Natural killer cell (primary cell): ENCODE measurements at regions of chr1 and their contacts with region 1.

Region 1: DNA sequence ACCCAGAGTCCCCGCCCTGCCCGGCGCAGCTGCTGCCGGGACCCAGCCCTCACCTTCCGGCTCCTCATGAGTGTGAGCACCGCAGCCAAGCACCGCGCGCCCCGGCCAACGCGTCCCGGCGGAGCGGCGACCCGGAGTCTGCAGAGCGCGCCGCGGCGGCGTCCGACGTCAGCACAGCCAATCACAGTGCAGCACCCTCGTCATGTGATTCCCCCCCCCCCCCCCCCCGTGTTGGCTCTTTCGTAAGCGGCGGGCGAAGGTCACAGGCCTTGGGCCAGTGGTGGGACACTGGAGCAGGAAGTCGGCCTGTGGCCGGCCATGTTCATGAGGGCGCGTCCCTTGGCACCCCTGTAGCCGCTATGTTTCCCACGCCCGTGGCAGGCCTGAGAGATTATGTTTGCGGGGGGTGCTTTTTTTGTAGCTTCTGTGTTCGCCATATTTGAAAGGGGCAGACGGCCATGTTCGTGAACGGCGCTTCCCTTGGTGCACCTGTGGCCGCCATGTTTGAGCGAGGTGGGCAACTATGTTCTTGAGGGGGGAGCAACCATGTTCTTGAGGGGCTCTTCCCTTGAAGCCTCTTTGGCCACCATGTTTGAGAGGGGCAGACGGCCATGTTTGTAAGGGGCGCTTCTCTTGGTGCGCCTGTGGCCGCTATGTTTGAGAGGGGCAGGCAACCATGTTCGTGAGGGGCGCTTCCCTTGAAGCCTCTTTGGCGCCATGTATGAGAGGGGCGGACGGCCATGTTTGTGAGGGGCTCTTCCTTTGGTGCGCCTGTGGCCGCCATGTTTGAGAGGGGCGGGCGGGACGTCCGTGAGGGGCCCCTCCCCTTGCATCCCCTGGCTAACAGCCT is at the start of gene C1orf174:
- DNase-seq: peak; percentile 90 to 98
- ATAC-seq: peak; percentile 78 to 88 (median 80)
- H3K4me3 ChIP-seq: peak within 1 kb of the TSS; percentile 83
- H3K4me3 Mint-ChIP-seq: peak within 1 kb of the TSS; percentile 88
- H3K27ac ChIP-seq: peak within 1 kb of the TSS; percentile 96
- H3K27ac Mint-ChIP-seq: peak within 1 kb of the TSS; percentile 95 to 96
- H3K4me1 ChIP-seq: peaks cover 47% of the 10 kb centered on the region
- H3K4me1 Mint-ChIP-seq: peaks cover 41 to 52% of the 10 kb centered on the region in 2 donors
- H3K27me3 ChIP-seq: no peaks in the 10 kb centered on the region
- H3K27me3 Mint-ChIP-seq: no peaks in the 10 kb centered on the region
- CTCF ChIP-seq: no peak
- total RNA-seq, gene C1orf174: 52.9 to 62.3 (median 61.5) TPM

Region 2: DNA sequence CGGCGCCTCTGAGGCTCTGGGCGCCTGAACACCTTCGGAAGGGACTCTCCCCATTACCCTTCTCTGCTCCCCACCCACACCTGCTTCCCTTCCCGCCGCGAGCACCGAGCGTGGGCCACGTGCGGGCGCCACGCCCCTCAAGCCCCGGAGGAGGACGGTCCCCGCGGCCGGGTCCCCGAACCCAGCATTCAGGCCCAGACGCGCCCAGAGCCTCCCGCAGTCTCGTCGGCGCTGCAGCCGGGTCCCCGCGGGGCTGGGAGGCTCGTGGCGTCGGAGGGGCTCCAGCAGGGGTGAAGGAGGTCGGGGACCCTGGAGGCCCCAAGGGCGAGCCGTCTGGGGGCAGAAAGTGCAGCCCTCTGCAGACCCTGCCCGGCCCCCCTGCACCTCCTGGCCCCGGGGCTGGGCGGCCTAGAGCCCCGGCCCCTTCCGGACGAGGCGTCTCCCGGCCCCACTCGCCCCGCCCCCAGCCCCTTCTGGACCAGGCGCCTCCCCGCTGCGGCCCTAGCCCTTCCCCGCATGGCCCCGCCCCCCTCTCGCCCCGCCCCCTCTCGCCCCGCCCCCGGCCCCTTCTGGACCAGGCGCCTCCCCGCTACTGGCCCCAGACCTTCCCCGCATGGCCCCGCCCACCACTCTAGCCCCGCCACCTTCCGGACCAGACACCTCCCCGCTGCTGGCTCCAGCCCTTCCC is 128.2 kb before region 1 on chr1:
- intact Hi-C with region 1: loop called (anchors 5 kb)
- DNase-seq: peak; percentile 77 to 89
- ATAC-seq: peak; percentile 90 to 93 (median 93)
- H3K4me3 ChIP-seq: peak overlapping the region; percentile 43
- H3K4me3 Mint-ChIP-seq: peak overlapping the region; percentile 57
- H3K27ac ChIP-seq: no peak overlapping the region
- H3K27ac Mint-ChIP-seq: no peak overlapping the region
- H3K4me1 ChIP-seq: peaks cover 31% of the 10 kb centered on the region
- H3K4me1 Mint-ChIP-seq: peaks cover 0 to 16% of the 10 kb centered on the region in 2 donors
- H3K27me3 ChIP-seq: no peaks in the 10 kb centered on the region
- H3K27me3 Mint-ChIP-seq: no peaks in the 10 kb centered on the region
- CTCF ChIP-seq: no peak

Region 3: GRCh38 chr1:3796215-3797061 is 103.9 kb before region 1 on chr1 and contains the start of gene LRRC47:
- intact Hi-C with region 1: loop called (anchors 1 kb)
- DNase-seq: peak; percentile 92 to 95
- ATAC-seq: peak; percentile 99 to 100 (median 99)
- H3K4me3 ChIP-seq: peak within 1 kb of the TSS; percentile 44
- H3K4me3 Mint-ChIP-seq: peak within 1 kb of the TSS; percentile 90
- H3K27ac ChIP-seq: peak within 1 kb of the TSS; percentile 61
- H3K27ac Mint-ChIP-seq: peak within 1 kb of the TSS; percentile 61 to 85
- H3K4me1 ChIP-seq: peaks cover 33% of the 10 kb centered on the region
- H3K4me1 Mint-ChIP-seq: peaks cover 18 to 38% of the 10 kb centered on the region in 2 donors
- H3K27me3 ChIP-seq: no peaks in the 10 kb centered on the region
- H3K27me3 Mint-ChIP-seq: peaks cover 0 to 5% of the 10 kb centered on the region in 2 donors
- CTCF ChIP-seq: no peak
- total RNA-seq, gene LRRC47: 33.5 to 49.8 (median 45.2) TPM

Region 4: GRCh38 chr1:3856908-3857790 is 43.2 kb before region 1 on chr1 and contains the starts of genes CEP104 and DFFB:
- intact Hi-C with region 1: loop called (anchors 1 kb)
- DNase-seq: peak; percentile 92 to 99
- ATAC-seq: peak; percentile 90 to 94 (median 91)
- H3K4me3 ChIP-seq: peak within 1 kb of the TSS; percentile 81
- H3K4me3 Mint-ChIP-seq: peak within 1 kb of the TSS; percentile 98
- H3K27ac ChIP-seq: peak within 1 kb of the TSS; percentile 69
- H3K27ac Mint-ChIP-seq: peak within 1 kb of the TSS; percentile 85 to 92
- H3K4me1 ChIP-seq: peaks cover 25% of the 10 kb centered on the region
- H3K4me1 Mint-ChIP-seq: peaks cover 24 to 32% of the 10 kb centered on the region in 2 donors
- H3K27me3 ChIP-seq: no peaks in the 10 kb centered on the region
- H3K27me3 Mint-ChIP-seq: no peaks in the 10 kb centered on the region
- CTCF ChIP-seq: peak; percentile 24
- total RNA-seq, gene CEP104: 37.1 to 60.2 (median 51.8) TPM
- total RNA-seq, gene DFFB: 18.3 to 27.8 (median 18.5) TPM

Region 5: GRCh38 chr1:3883194-3883925 is 17.0 kb before region 1 on chr1:
- intact Hi-C with region 1: loop called (anchors 1 kb)
- DNase-seq: peak; percentile 45 to 72
- ATAC-seq: peak; percentile 83 to 89 (median 85)
- H3K4me3 ChIP-seq: no peak overlapping the region
- H3K4me3 Mint-ChIP-seq: peak overlapping the region; percentile 71
- H3K27ac ChIP-seq: peak overlapping the region; percentile 86
- H3K27ac Mint-ChIP-seq: peak overlapping the region; percentile 85 to 95
- H3K4me1 ChIP-seq: peaks cover 41% of the 10 kb centered on the region
- H3K4me1 Mint-ChIP-seq: peaks cover 23 to 33% of the 10 kb centered on the region in 2 donors
- H3K27me3 ChIP-seq: no peaks in the 10 kb centered on the region
- H3K27me3 Mint-ChIP-seq: no peaks in the 10 kb centered on the region
- CTCF ChIP-seq: peak; percentile 12

Region 6: DNA sequence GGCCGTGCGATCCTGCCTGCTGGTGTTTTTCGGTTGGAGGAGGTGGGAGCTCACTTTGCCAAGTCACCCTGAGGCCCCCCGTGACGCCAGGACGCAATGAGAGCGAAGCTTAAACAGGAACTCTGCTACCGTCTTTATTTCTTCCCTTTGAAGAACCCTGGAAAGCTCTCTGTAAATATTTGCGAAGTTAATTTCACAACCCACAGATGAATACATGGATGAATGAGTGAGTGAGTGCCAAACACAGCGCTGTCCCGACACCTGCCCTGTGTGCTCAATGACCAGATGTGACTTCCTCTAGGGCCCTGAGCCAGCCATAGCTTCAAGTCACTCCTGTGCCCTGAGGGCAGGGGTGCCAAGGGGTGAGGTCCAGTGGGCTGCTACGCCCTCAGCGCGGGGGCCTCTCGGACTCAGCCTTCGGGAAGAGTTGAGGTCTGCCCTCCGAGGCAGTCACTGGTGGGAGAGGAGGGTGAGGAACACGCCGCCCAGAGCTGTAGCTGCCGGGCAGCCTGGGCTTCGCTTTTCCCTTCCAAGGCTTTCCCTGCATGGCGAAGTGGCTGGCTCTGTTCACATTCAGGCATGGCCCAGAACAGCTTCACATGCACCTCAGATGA is 42.6 kb after region 1 on chr1:
- intact Hi-C with region 1: no loop called
- DNase-seq: no peak
- ATAC-seq: no peak
- H3K4me3 ChIP-seq: no peak overlapping the region
- H3K4me3 Mint-ChIP-seq: no peak overlapping the region
- H3K27ac ChIP-seq: no peak overlapping the region
- H3K27ac Mint-ChIP-seq: no peak overlapping the region
- H3K4me1 ChIP-seq: no peaks in the 10 kb centered on the region
- H3K4me1 Mint-ChIP-seq: no peaks in the 10 kb centered on the region
- H3K27me3 ChIP-seq: no peaks in the 10 kb centered on the region
- H3K27me3 Mint-ChIP-seq: peaks cover 9% of the 10 kb centered on the region in 2 donors
- CTCF ChIP-seq: no peak